PC-9 (cell line): ENCODE measurements at regions of chr10 and their contacts with region 1.

Region 1: DNA sequence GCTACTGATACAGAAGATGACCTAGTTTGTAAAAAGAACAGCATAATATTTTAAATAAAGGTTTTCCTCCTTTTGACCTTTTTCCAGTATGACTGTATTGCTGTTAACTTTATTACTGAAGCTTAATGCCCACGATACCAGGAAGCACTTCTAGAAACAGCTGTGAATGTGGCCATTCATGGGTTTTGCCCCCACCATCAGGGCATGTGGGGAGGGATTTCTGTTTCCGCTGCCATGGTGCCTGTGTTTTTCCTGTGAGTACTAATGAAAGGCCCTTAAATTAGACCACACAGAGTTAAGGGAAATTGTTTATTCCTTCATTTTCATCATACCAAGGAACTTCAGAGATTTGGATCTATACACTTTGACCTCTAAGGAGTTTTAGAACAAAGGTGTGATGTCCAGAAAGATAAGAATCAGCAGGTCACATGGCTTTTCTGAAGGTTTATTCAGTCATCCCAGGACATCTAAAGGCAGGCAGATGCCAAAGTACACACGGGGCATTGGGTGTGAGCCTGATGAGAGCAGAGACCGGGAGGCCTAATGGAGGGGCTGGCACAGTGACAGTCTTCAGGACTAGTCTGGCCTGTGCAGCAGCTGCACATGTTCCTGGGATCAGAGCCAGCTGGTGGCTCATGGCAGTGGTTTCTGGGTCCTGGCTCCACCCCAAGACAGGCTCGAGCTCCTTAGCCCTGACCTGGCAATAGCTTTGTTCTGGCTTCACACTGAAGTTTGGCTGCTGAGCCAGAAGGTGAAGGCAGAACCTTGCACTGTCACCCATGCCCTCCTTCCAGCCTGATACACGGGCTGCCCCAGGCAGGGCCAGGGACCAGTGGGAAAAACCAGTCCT is 190.9 kb downstream of the REEP3 start:
- DNase-seq: peak; percentile 98 to 99
- H3K4me3 ChIP-seq: no peak overlapping the region
- H3K27ac ChIP-seq: peak overlapping the region; percentile 53
- H3K4me1 ChIP-seq: peaks cover 39% of the 10 kb centered on the region
- H3K27me3 ChIP-seq: no peaks in the 10 kb centered on the region
- CTCF ChIP-seq: no peak

Region 2: DNA sequence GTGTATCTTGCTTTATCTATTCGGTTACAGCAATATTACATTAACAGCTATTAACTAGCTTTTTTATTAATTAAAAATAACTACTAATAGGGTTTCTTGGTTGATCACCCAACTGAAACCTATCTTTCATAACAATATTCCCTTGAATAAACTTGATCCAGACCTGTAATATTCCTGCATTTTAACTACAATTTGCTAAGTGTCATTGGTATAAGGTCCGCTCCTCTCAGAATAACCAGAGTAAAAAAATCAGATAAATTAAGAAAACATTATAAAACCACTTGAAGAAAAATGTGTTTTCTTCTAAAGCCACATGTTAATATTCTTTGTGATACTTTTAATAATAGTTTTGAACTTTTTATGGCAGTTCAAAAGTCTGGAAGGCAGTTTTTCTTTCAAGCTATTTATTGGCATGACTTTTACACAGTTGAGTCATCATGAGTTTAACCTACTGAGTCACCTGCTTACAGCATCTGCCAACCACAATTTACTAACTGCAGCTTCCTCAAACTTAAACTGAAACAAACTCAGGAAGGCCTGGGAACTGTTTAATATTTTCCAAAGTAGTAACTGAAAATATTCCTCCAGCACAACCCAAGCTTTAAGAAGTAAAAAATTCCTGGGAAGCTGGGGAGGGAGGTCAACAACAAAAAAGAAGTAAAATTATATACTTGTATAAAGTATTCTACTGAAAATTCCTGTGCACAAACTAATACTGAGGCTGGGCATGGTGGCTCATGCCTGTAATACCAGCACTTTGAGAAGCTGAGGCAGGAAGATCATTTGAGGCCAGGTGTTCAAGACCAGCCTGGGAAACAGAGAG is 475.8 kb before region 1 on chr10:
- CTCF ChIA-PET with region 1: no interaction called
- POLR2A ChIA-PET with region 1: interaction called, 36 read pairs
- intact Hi-C with region 1: no loop called
- DNase-seq: peak; percentile 22 to 91
- H3K4me3 ChIP-seq: no peak overlapping the region
- H3K27ac ChIP-seq: peak overlapping the region; percentile 93
- H3K4me1 ChIP-seq: peaks cover 40% of the 10 kb centered on the region
- H3K27me3 ChIP-seq: no peaks in the 10 kb centered on the region
- CTCF ChIP-seq: no peak

Region 3: GRCh38 chr10:63430097-63430998 is 281.7 kb before region 1 on chr10:
- CTCF ChIA-PET with region 1: no interaction called
- POLR2A ChIA-PET with region 1: no interaction called
- intact Hi-C with region 1: loop called (anchors 10 kb)
- DNase-seq: peak in 1 of 2 experiments; percentile 69
- H3K4me3 ChIP-seq: no peak overlapping the region
- H3K27ac ChIP-seq: no peak overlapping the region
- H3K4me1 ChIP-seq: peaks cover 13% of the 10 kb centered on the region
- H3K27me3 ChIP-seq: no peaks in the 10 kb centered on the region
- CTCF ChIP-seq: no peak

Region 4: GRCh38 chr10:63465293-63466143 is 246.6 kb before region 1 on chr10 and contains the start of gene JMJD1C:
- CTCF ChIA-PET with region 1: no interaction called
- POLR2A ChIA-PET with region 1: no interaction called
- intact Hi-C with region 1: loop called (anchors 5 kb)
- DNase-seq: peak; percentile 65 to 80
- H3K4me3 ChIP-seq: peak within 1 kb of the TSS; percentile 94
- H3K27ac ChIP-seq: peak within 1 kb of the TSS; percentile 33
- H3K4me1 ChIP-seq: peaks cover 23% of the 10 kb centered on the region
- H3K27me3 ChIP-seq: no peaks in the 10 kb centered on the region
- CTCF ChIP-seq: no peak
- total RNA-seq, gene JMJD1C: 68.6 and 78.7 TPM in 2 replicates

Region 5: DNA sequence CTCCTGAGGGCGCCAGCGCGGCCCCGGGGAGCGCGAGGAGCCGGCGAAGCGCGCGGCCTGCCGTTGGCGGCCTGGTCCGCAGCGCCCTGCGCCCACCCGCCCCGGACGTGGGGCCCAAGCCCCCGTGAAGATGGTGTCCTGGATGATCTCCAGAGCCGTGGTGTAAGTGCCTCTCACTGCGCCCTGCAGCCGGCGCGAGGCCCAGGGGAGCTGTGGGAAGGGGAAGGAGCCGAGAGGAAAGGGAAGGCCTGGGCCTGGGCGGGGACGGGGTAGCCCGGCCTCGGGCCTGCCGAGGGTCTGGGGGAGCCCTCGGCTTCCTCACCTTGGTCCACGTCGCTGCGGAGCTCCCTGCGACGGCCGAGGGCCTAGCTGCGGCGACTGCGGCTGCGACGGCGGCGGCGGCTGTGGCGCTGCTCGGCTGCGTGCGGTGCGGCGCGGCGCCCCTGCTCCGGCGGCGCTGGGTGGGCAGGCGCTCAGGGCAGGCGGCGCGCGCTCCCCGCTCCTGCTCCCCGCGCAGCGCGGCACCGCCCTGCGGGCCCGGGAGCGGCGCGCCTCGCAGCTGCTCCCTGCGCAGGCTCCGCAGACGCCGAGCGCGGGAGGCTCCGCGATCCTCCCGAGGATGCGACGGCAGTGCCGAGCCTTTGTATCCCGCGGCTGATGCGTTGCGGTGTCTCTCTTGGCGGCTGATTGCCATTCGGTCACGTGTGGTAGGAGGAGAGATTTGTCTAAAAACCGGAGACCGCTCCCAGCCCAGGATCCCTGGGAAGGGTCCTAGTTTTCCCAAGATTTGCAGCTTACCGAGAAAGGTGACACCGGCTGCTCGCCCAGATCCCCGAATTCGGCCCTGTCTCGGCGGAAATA is 190.4 kb before region 1 on chr10:
- CTCF ChIA-PET with region 1: no interaction called
- POLR2A ChIA-PET with region 1: no interaction called
- intact Hi-C with region 1: loop called (anchors 5 kb)
- DNase-seq: peak; percentile 54 to 74
- H3K4me3 ChIP-seq: peak overlapping the region; percentile 74
- H3K27ac ChIP-seq: peak overlapping the region; percentile 89
- H3K4me1 ChIP-seq: peaks cover 39% of the 10 kb centered on the region
- H3K27me3 ChIP-seq: no peaks in the 10 kb centered on the region
- CTCF ChIP-seq: no peak

Region 6: DNA sequence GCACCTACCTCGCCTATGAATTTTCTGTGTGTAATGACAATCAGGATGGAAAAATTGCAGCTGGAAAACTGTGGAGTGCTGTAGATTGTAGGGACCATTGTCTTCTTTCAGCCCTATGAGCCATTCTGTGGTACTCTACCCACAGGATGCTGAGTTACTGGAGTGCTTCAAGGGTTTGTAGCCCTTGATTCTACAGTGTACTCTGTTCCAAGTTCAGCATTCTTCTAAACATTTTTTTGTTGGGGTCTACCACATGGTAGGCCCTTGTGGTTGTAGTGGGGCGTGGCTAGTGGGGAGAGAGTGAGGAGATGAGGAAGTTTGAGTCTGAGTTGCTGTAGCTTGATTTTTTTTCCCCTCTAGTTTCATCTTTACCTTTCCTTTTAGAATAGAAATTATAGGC is 157.4 kb before region 1 on chr10:
- CTCF ChIA-PET with region 1: no interaction called
- POLR2A ChIA-PET with region 1: no interaction called
- intact Hi-C with region 1: loop called (anchors 1 kb)
- DNase-seq: peak; percentile 60
- H3K4me3 ChIP-seq: peak overlapping the region; percentile 1; the same call in 1 of the 2 replicates
- H3K27ac ChIP-seq: peak overlapping the region; percentile 99
- H3K4me1 ChIP-seq: peaks cover 36% of the 10 kb centered on the region
- H3K27me3 ChIP-seq: no peaks in the 10 kb centered on the region
- CTCF ChIP-seq: no peak

Region 7: GRCh38 chr10:63887023-63887589 is 175.0 kb after region 1 on chr10:
- CTCF ChIA-PET with region 1: no interaction called
- POLR2A ChIA-PET with region 1: no interaction called
- intact Hi-C with region 1: no loop called
- DNase-seq: no peak
- H3K4me3 ChIP-seq: no peak overlapping the region
- H3K27ac ChIP-seq: no peak overlapping the region
- H3K4me1 ChIP-seq: no peaks in the 10 kb centered on the region
- H3K27me3 ChIP-seq: peaks cover 17% of the 10 kb centered on the region
- CTCF ChIP-seq: no peak